RWPE1 (cell line): ENCODE measurements at regions of chr9 and their contacts with region 1.

Region 1: DNA sequence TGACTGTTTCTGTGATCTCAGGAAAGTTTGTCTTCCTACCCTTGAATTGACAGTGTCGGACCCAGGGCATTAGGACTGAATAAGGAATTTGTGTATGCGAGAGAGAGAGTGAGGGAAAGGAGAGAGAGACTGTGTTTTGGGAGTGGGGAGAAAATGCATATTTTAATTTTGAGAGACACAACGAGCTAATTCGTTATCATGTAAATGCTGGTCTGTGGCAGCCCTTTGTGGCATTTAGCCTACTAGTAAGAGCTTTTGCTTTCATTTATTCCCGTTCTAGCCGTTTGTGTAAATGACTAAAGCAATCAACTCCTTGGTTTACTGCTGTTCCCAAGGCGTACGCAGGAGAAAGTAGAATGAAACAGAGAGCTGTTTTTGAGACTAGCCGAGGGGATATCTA is 79.8 kb upstream of the MAMDC2 start:
- DNase-seq: no peak
- H3K27ac ChIP-seq: no peak overlapping the region
- CTCF ChIP-seq: no peak

Region 2: GRCh38 chr9:69433392-69433791 is 530.4 kb before region 1 on chr9:
- CTCF ChIA-PET with region 1: no interaction called
- POLR2A ChIA-PET with region 1: no interaction called
- DNase-seq: peak; percentile 71
- H3K27ac ChIP-seq: peak overlapping the region; percentile 42; the same call in 1 of the 2 replicates
- CTCF ChIP-seq: no peak

Region 3: GRCh38 chr9:70111042-70111602 is 147.3 kb after region 1 on chr9:
- CTCF ChIA-PET with region 1: interaction called, 28 read pairs
- POLR2A ChIA-PET with region 1: no interaction called
- DNase-seq: peak; percentile 62
- H3K27ac ChIP-seq: no peak overlapping the region
- CTCF ChIP-seq: peak; percentile 77